BJ (cell line): ENCODE measurements at regions of chr12 and their contacts with region 1.

Region 1: GRCh38 chr12:50302686-50303085 is 19.4 kb upstream of the LIMA1 start:
- DNase-seq: peak; percentile 71
- H3K4me3 ChIP-seq: no peak overlapping the region
- H3K27me3 ChIP-seq: no peaks in the 10 kb centered on the region
- CTCF ChIP-seq: no peak

Region 2: DNA sequence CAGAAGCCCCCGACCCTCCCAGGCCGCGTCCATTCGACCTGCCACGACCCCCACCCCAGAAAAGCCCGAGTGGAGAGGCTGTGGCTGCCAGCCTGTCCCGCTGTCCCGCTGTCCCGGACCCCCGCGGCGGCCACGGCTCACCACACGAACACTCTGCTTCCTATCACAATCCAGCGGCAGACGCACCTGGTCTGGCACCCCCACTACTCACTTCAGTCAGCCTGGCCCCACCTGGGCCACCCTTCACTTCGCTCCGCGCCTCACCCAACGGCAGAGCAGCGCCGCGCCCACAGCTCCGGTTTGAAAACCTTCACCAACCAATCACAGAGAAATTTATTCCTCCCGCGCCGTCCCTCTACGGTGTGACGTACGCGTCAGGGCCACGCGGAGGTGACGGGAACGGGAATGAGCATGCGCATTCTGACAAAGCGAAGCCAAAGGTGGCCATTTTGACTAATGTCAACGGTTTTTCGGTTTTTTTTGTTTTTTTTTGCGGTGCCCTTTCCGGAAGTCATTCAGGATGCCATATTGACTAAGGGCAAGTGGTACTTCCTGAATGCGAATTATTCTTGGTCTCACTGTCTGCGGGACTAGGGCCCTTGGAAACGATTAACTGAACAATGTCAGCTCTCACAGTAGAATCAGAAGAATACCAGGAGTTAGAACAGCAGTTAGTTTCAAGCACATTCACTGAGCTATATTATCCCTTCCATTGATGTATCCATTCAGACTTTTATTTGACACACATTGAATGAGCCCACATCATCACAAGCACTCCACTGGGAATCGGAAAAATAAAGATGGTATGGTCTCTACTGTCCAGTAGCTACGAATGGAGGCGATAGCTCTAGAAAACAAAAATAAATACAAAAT is 277.3 kb before region 1 on chr12 and contains the start of gene RACGAP1:
- CTCF ChIA-PET with region 1: no interaction called
- POLR2A ChIA-PET with region 1: no interaction called
- DNase-seq: peak; percentile 87
- H3K4me3 ChIP-seq: peak within 1 kb of the TSS; percentile 65
- H3K27me3 ChIP-seq: no peaks in the 10 kb centered on the region
- CTCF ChIP-seq: no peak
- polyA plus RNA-seq, gene RACGAP1: 42.8 and 55.3 TPM in 2 replicates

Region 3: DNA sequence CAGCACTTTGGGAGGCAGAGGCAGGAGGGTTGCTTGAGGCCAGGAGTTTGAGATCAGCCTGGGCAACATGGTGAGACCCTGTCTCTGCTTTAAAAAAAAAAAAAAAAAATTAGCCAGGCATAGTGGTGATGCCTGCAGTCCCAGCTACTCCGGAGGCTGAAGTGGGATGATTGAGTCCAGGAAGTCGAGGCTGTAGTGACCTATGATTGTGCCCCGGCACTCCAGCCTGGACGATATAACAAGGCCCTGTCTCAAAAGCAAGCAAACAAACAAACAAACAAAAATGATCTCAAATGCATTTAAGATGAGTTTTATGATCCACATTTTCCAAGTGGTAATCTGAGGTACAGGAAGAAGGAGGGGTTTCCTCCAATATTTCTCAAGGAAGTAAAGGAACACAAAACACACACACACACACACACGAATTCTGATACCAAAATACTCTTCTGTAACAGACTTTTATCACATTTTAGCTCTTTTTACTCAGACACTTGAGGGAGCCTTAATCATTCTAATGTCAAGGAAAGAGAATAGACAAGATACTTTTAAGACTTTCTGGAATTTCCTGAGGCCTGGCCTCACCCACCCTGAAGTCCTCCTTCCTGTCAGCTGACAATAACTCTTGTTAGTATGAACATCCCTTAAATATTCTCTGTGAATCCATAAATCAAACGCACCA is 91.2 kb before region 1 on chr12:
- CTCF ChIA-PET with region 1: no interaction called
- POLR2A ChIA-PET with region 1: interaction called, 19 read pairs
- DNase-seq: no peak
- H3K4me3 ChIP-seq: no peak overlapping the region
- H3K27me3 ChIP-seq: no peaks in the 10 kb centered on the region
- CTCF ChIP-seq: no peak

Region 4: GRCh38 chr12:50283229-50283923 is 19.3 kb before region 1 on chr12 and contains the start of gene LIMA1:
- CTCF ChIA-PET with region 1: no interaction called
- POLR2A ChIA-PET with region 1: no interaction called
- DNase-seq: no peak
- H3K4me3 ChIP-seq: peak within 1 kb of the TSS; percentile 86
- H3K27me3 ChIP-seq: no peaks in the 10 kb centered on the region
- CTCF ChIP-seq: peak; percentile 60
- polyA plus RNA-seq, gene LIMA1: 368 and 384 TPM in 2 replicates